ENCODE measurements at regions of chr9 and their contacts with region 1.

Region 1: GRCh38 chr9:115013998-115014397 is 83.6 kb upstream of the TNFSF8 start:
- DNase-seq: peak; percentile 83
- H3K4me3 Mint-ChIP-seq: no peak overlapping the region
- H3K27ac Mint-ChIP-seq: peak overlapping the region; percentile 24
- H3K4me1 Mint-ChIP-seq: peaks cover 30% of the 10 kb centered on the region
- H3K27me3 Mint-ChIP-seq: peaks cover 17% of the 10 kb centered on the region

Region 2: DNA sequence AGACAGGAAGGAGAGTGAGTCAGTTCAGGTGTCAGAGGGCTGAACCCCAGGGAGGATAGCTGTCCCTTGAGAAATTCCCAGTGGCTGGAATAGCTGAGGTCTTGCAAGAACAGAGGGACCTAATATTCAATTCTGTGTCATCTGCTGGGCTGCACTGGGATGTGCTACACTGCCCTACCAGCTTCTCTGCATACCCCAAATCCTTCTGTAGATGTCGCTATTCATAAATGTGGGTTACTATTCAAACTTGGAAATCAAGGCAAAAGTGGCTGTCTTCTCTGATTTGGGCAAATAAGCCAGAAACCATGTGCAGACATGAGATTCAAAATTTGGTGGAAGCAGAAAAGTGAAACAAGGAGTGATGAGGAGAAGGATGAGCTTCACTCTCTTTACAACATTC is 99.9 kb before region 1 on chr9:
- CTCF ChIA-PET with region 1: interaction called, 15 read pairs
- POLR2A ChIA-PET with region 1: interaction called, 3 read pairs
- DNase-seq: no peak
- H3K4me3 Mint-ChIP-seq: no peak overlapping the region
- H3K27ac Mint-ChIP-seq: peak overlapping the region; percentile 62
- H3K4me1 Mint-ChIP-seq: peaks cover 74% of the 10 kb centered on the region
- H3K27me3 Mint-ChIP-seq: no peaks in the 10 kb centered on the region

Measured in activated CD4-positive, alpha-beta memory T cell treated with anti-CD3 and anti-CD28 coated beads, Interleukin-2, amount 10 ng/mL, durations not matched to agents 7 days and 5 days (primary cell).